Activated CD8-positive, alpha-beta T cell treated with anti-CD3 and anti-CD28 coated beads for 36 hours (primary cell): ENCODE measurements at regions of chr20 and their contacts with region 1.

Region 1: DNA sequence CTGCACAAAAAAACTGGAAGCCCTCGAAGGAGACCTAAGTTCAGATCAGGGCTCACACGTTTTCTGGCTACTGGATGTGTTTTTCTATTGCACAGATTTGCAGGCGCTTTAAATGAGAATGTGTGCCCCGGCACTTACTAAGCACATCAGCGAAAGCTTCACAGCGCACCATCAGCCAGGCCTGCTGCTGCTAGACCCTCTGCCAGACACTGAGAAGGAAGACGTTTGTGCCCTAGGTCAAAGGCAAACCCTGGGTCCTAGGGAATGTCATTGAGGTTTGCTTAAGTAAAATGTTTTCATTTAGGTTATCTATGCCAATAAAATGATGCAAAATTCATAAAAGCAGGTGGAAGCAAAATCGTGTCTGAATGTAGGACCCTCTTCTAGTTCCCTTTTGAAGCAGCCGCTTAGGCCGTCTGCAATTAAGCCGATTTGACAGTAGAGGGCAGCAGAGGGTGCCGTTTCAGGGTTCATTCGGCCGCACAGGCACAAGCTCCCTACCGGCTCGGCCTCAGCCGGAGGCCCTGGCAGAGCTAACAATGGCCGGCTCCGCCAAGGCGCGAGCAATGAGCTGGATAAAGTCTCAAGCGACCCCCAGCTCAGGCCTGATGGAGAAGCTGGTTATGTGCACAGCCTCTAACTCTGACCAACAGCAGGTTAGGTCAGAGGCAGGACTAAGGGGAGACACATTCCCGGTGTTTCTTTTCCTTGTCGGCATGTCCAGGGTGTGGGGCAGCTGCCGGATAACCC is 107.2 kb upstream of the FOXA2 start:
- DNase-seq: peak; percentile 61
- ATAC-seq: peak; percentile 87
- H3K4me3 Mint-ChIP-seq: no peak overlapping the region
- H3K27ac Mint-ChIP-seq: no peak overlapping the region
- H3K4me1 Mint-ChIP-seq: no peaks in the 10 kb centered on the region
- H3K27me3 Mint-ChIP-seq: no peaks in the 10 kb centered on the region
- CTCF ChIP-seq: peak; percentile 65

Region 2: GRCh38 chr20:22339091-22339881 is 352.3 kb before region 1 on chr20:
- CTCF ChIA-PET with region 1: interaction called, 40 read pairs
- POLR2A ChIA-PET with region 1: no interaction called
- intact Hi-C with region 1: no loop called
- DNase-seq: peak; percentile 66
- ATAC-seq: peak; percentile 60
- H3K4me3 Mint-ChIP-seq: no peak overlapping the region
- H3K27ac Mint-ChIP-seq: no peak overlapping the region
- H3K4me1 Mint-ChIP-seq: no peaks in the 10 kb centered on the region
- H3K27me3 Mint-ChIP-seq: peaks cover 6% of the 10 kb centered on the region
- CTCF ChIP-seq: peak; percentile 86

Region 3: DNA sequence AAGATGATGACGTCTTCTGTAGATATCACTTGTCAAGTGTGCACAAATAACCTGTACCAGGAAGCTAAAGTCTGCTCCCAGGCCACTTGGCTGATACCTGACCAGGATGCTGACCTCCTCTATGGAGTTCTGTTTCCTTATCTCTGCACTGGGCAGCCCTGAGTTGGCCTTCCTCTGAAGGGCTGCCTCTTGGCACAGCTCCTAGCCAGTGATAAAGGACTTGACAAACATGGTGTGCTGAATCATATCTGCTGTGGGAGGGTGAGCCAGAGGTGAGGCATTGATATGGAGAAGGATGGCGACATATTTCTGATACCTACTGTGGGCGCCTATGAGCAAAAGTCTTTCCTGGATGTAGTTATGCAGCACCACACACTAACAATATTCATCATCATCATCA is 74.4 kb before region 1 on chr20:
- CTCF ChIA-PET with region 1: no interaction called
- POLR2A ChIA-PET with region 1: no interaction called
- intact Hi-C with region 1: no loop called
- DNase-seq: no peak
- ATAC-seq: no peak
- H3K4me3 Mint-ChIP-seq: no peak overlapping the region
- H3K27ac Mint-ChIP-seq: no peak overlapping the region
- H3K4me1 Mint-ChIP-seq: no peaks in the 10 kb centered on the region
- H3K27me3 Mint-ChIP-seq: peaks cover 1% of the 10 kb centered on the region
- CTCF ChIP-seq: no peak

Region 4: DNA sequence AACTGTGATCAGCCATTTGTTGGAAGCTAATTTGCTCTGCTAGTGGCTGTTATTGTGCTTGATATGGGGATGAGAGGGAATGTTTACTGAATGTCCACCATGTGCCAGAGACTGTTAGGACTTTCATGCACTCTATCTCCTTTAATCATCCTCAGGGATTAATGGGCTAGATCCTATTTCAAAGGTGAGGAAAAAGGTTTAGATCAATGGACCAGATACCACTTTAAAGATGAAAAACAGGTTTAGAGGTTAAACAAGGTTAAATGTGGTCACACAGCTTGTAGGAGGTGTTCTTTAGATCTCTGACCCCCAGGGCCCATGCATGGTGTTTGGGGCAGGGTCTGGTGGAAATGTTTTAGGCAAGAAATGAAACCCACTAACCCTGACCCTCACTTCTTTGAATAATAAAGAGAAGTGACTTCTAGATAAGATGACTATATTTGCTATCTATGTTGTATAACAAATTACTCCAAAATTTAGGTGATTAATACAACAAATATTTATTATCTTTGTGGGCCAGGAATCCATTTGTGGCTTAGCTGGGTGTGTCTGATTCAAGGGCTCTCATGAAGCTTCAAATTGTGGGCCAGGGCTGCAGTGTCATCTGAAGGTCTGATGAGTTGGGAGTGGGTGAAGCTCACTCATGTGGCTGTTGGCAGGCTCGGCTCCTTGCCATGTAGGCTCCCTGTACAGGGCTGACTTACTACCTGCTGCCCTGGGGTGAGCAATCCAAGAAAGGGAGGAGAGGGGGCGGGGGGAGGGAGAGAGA is 20.6 kb after region 1 on chr20:
- CTCF ChIA-PET with region 1: interaction called, 12 read pairs
- POLR2A ChIA-PET with region 1: no interaction called
- intact Hi-C with region 1: no loop called
- DNase-seq: no peak
- ATAC-seq: no peak
- H3K4me3 Mint-ChIP-seq: no peak overlapping the region
- H3K27ac Mint-ChIP-seq: no peak overlapping the region
- H3K4me1 Mint-ChIP-seq: no peaks in the 10 kb centered on the region
- H3K27me3 Mint-ChIP-seq: peaks cover 5% of the 10 kb centered on the region
- CTCF ChIP-seq: no peak

Region 5: GRCh38 chr20:22768266-22769178 is 77.0 kb after region 1 on chr20:
- CTCF ChIA-PET with region 1: no interaction called
- POLR2A ChIA-PET with region 1: no interaction called
- intact Hi-C with region 1: no loop called
- DNase-seq: no peak
- ATAC-seq: no peak
- H3K4me3 Mint-ChIP-seq: no peak overlapping the region
- H3K27ac Mint-ChIP-seq: no peak overlapping the region
- H3K4me1 Mint-ChIP-seq: no peaks in the 10 kb centered on the region
- H3K27me3 Mint-ChIP-seq: peaks cover 2% of the 10 kb centered on the region
- CTCF ChIP-seq: no peak

Region 6: GRCh38 chr20:22866812-22867341 is 175.3 kb after region 1 on chr20:
- CTCF ChIA-PET with region 1: no interaction called
- POLR2A ChIA-PET with region 1: no interaction called
- intact Hi-C with region 1: no loop called
- DNase-seq: no peak
- ATAC-seq: no peak
- H3K4me3 Mint-ChIP-seq: no peak overlapping the region
- H3K27ac Mint-ChIP-seq: no peak overlapping the region
- H3K4me1 Mint-ChIP-seq: no peaks in the 10 kb centered on the region
- H3K27me3 Mint-ChIP-seq: no peaks in the 10 kb centered on the region
- CTCF ChIP-seq: no peak

Region 7: DNA sequence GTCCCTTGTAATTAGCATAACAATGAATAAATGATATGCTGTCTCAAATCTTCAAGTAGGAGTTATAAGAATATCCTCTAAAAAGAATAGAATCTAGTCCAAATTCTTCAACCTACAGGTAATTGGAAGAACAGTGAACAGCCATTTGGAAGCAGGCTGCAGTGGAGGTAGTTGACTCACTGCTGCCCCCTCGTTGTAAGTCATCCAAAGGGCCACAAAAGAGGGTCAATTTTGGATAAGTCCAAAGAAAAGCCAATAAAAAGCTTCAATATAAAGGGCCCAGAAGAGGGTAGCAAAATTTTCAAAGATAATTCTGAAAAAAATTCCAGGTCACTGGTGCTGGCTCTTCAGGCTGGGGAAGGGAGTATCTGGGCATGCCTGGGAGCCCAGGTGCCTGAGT is 282.8 kb after region 1 on chr20:
- CTCF ChIA-PET with region 1: interaction called, 15 read pairs
- POLR2A ChIA-PET with region 1: no interaction called
- intact Hi-C with region 1: no loop called
- DNase-seq: peak; percentile 4
- ATAC-seq: no peak
- H3K4me3 Mint-ChIP-seq: no peak overlapping the region
- H3K27ac Mint-ChIP-seq: no peak overlapping the region
- H3K4me1 Mint-ChIP-seq: no peaks in the 10 kb centered on the region
- H3K27me3 Mint-ChIP-seq: peaks cover 2% of the 10 kb centered on the region
- CTCF ChIP-seq: peak; percentile 31

Region 8: GRCh38 chr20:23222531-23223200 is 531.1 kb after region 1 on chr20:
- CTCF ChIA-PET with region 1: no interaction called
- POLR2A ChIA-PET with region 1: no interaction called
- intact Hi-C with region 1: no loop called
- DNase-seq: no peak
- ATAC-seq: no peak
- H3K4me3 Mint-ChIP-seq: no peak overlapping the region
- H3K27ac Mint-ChIP-seq: no peak overlapping the region
- H3K4me1 Mint-ChIP-seq: no peaks in the 10 kb centered on the region
- H3K27me3 Mint-ChIP-seq: peaks cover 1% of the 10 kb centered on the region
- CTCF ChIP-seq: no peak

Region 9: GRCh38 chr20:23235173-23236027 is 543.9 kb after region 1 on chr20:
- CTCF ChIA-PET with region 1: interaction called, 10 read pairs
- POLR2A ChIA-PET with region 1: no interaction called
- intact Hi-C with region 1: loop called (anchors 10 kb)
- DNase-seq: peak; percentile 58
- ATAC-seq: peak; percentile 78
- H3K4me3 Mint-ChIP-seq: no peak overlapping the region
- H3K27ac Mint-ChIP-seq: no peak overlapping the region
- H3K4me1 Mint-ChIP-seq: no peaks in the 10 kb centered on the region
- H3K27me3 Mint-ChIP-seq: peaks cover 4% of the 10 kb centered on the region
- CTCF ChIP-seq: peak; percentile 85

Region 10: GRCh38 chr20:23340524-23340923 is 649.0 kb after region 1 on chr20:
- CTCF ChIA-PET with region 1: interaction called, 42 read pairs
- POLR2A ChIA-PET with region 1: no interaction called
- intact Hi-C with region 1: loop called (anchors 5 kb)
- DNase-seq: peak; percentile 64
- ATAC-seq: peak; percentile 72
- H3K4me3 Mint-ChIP-seq: no peak overlapping the region
- H3K27ac Mint-ChIP-seq: no peak overlapping the region
- H3K4me1 Mint-ChIP-seq: no peaks in the 10 kb centered on the region
- H3K27me3 Mint-ChIP-seq: no peaks in the 10 kb centered on the region
- CTCF ChIP-seq: peak; percentile 54